Naive thymus-derived CD4-positive, alpha-beta T cell (primary cell): ENCODE measurements at regions of chr2 and their contacts with region 1.

Region 1: GRCh38 chr2:198296665-198297308 is 492.4 kb downstream of the PLCL1 start:
- DNase-seq: peak; percentile 11 to 67 (median 54)
- ATAC-seq: peak; percentile 84
- H3K4me3 ChIP-seq: no peak overlapping the region
- H3K4me3 Mint-ChIP-seq: peak overlapping the region in 1 of 10 donors; percentile 8
- H3K27ac ChIP-seq: no peak overlapping the region
- H3K27ac Mint-ChIP-seq: peak overlapping the region in 1 of 9 donors; percentile 41
- H3K4me1 ChIP-seq: no peaks in the 10 kb centered on the region
- H3K4me1 Mint-ChIP-seq: peaks cover 0 to 5% (median 0%) of the 10 kb centered on the region in 7 donors
- H3K27me3 ChIP-seq: no peaks in the 10 kb centered on the region
- H3K27me3 Mint-ChIP-seq: peaks cover 7 to 19% (median 8%) of the 10 kb centered on the region in 5 donors

Region 2: DNA sequence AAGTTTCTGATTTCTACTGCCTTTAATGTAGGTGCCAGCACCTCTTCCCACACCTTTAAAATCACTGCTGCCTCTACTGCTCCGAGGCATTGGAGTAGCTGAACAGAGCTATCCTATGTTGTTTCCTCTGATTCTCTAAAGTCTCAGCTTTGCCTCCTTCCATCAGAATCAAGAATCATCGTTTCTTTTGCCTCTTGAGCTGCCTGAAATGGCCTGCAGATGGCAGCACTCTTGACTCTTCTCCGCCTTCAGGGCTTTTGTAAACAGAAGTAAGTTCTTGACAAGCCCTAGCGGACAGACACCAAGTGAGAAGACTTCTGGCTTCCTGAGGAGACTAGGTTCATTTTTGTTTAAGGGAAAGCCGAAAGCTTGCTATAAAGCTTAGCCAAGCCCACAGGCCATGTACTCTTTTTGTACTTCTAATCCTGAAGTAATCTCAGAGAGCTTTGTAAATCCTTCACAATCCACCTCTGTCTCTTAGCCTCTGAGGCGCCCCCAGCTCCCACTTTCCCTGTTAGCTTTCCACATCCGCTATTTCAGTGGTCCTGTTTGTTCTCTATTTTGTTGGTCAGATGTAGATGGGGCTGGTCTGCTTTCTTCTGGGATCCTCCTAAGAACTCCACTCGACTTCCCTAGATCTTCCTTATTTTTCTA is 1545.7 kb before region 1 on chr2:
- CTCF ChIA-PET with region 1: no interaction called
- POLR2A ChIA-PET with region 1: no interaction called
- intact Hi-C with region 1: loop called in 1 of 2 experiments (anchors 1 kb)
- DNase-seq: peak; percentile 17 to 62 (median 51)
- ATAC-seq: peak; percentile 95
- H3K4me3 ChIP-seq: no peak overlapping the region
- H3K4me3 Mint-ChIP-seq: peak overlapping the region in 2 of 10 donors; percentile 7 to 33
- H3K27ac ChIP-seq: no peak overlapping the region
- H3K27ac Mint-ChIP-seq: peak overlapping the region in 4 of 9 donors; percentile 21 to 33 (median 28)
- H3K4me1 ChIP-seq: no peaks in the 10 kb centered on the region
- H3K4me1 Mint-ChIP-seq: peaks cover 9 to 24% (median 16%) of the 10 kb centered on the region in 7 donors
- H3K27me3 ChIP-seq: no peaks in the 10 kb centered on the region
- H3K27me3 Mint-ChIP-seq: no peaks in the 10 kb centered on the region

Region 3: GRCh38 chr2:197453161-197453914 is 843.4 kb before region 1 on chr2 and contains the start of gene COQ10B:
- CTCF ChIA-PET with region 1: no interaction called
- POLR2A ChIA-PET with region 1: no interaction called
- intact Hi-C with region 1: no loop called
- DNase-seq: peak; percentile 87 to 99 (median 98)
- ATAC-seq: peak; percentile 92
- H3K4me3 ChIP-seq: peak within 1 kb of the TSS; percentile 92
- H3K4me3 Mint-ChIP-seq: peak within 1 kb of the TSS; percentile 92 to 100 (median 99)
- H3K27ac ChIP-seq: peak within 1 kb of the TSS; percentile 96
- H3K27ac Mint-ChIP-seq: peak within 1 kb of the TSS; percentile 97 to 100 (median 100)
- H3K4me1 ChIP-seq: peaks cover 16% of the 10 kb centered on the region in 2 donors
- H3K4me1 Mint-ChIP-seq: peaks cover 25 to 56% (median 47%) of the 10 kb centered on the region in 7 donors
- H3K27me3 ChIP-seq: no peaks in the 10 kb centered on the region
- H3K27me3 Mint-ChIP-seq: peaks cover 0 to 2% (median 0%) of the 10 kb centered on the region in 5 donors
- total RNA-seq, gene COQ10B: 22.9 to 57.2 (median 30.5) TPM

Region 4: DNA sequence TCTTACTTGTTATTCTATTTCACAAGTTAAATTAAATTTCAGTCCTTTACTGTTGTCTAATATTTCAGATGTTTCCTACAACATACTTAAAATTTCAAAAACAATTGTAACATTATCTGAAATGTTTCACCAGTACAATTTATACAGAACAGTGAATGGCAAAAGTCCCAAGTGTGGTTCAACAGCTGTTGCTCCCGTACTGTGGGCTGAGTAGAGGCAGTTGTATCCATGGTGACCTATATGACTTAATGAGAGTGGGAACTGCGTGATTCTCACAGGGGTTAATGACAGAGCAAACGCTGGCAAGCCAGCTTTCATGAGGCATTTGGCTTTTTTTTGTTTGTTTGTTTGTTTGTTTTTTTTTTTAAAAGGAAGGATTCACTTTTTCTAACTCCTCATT is 497.7 kb before region 1 on chr2:
- CTCF ChIA-PET with region 1: interaction called, 32 read pairs
- POLR2A ChIA-PET with region 1: interaction called, 10 read pairs
- intact Hi-C with region 1: loop called (anchors 1 kb)
- DNase-seq: no peak
- ATAC-seq: no peak
- H3K4me3 ChIP-seq: no peak overlapping the region
- H3K4me3 Mint-ChIP-seq: no peak overlapping the region
- H3K27ac ChIP-seq: no peak overlapping the region
- H3K27ac Mint-ChIP-seq: no peak overlapping the region
- H3K4me1 ChIP-seq: peaks cover 4 to 7% of the 10 kb centered on the region in 2 donors
- H3K4me1 Mint-ChIP-seq: peaks cover 6 to 12% (median 11%) of the 10 kb centered on the region in 7 donors
- H3K27me3 ChIP-seq: peaks cover 0 to 5% of the 10 kb centered on the region in 2 donors
- H3K27me3 Mint-ChIP-seq: peaks cover 0 to 45% (median 12%) of the 10 kb centered on the region in 5 donors

Region 5: DNA sequence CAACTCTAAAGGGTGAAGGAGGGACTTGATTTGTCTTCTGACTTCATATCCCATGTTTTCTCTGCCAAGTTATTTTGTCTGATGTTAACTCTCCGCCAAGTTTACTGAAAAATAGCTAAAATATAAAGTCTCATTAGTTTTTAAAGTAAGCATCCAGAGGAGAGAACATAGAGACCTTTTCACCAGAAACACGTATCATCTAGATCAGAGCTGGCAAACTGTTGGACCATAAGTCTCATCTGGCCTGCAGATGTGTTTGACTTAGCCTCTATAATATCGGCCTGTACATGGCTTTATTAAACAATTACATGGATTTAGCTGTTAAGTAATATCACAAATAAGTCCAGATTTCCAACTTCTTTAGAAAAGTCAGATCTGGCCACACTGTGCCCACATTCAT is 309.8 kb before region 1 on chr2:
- CTCF ChIA-PET with region 1: no interaction called
- POLR2A ChIA-PET with region 1: no interaction called
- intact Hi-C with region 1: loop called in 1 of 2 experiments (anchors 10 kb)
- DNase-seq: no peak
- ATAC-seq: no peak
- H3K4me3 ChIP-seq: no peak overlapping the region
- H3K4me3 Mint-ChIP-seq: no peak overlapping the region
- H3K27ac ChIP-seq: no peak overlapping the region
- H3K27ac Mint-ChIP-seq: peak overlapping the region in 1 of 9 donors; percentile 25
- H3K4me1 ChIP-seq: peaks cover 0 to 4% of the 10 kb centered on the region in 2 donors
- H3K4me1 Mint-ChIP-seq: peaks cover 0 to 55% (median 28%) of the 10 kb centered on the region in 7 donors
- H3K27me3 ChIP-seq: no peaks in the 10 kb centered on the region
- H3K27me3 Mint-ChIP-seq: no peaks in the 10 kb centered on the region

Region 6: DNA sequence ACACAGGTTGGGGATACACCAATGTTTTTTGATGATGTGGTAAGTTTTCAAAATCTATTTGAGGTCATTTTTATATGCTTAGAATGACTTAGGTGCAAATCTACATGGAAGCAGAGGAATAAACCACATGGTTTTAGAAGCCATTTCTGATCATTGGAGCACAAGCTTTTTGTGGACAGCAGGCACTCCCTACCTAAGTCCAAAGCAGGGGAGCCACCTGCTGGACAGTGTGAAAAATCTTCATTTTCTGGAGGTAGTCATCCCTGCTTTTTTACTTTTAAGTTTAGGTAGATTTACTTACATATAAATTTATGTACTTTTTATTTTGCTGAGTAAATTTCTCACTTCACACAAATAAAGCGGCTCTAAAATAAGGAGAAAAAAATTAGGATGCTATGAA is 169.2 kb before region 1 on chr2:
- CTCF ChIA-PET with region 1: interaction called, 13 read pairs
- POLR2A ChIA-PET with region 1: no interaction called
- intact Hi-C with region 1: loop called (anchors 1 to 2 kb)
- DNase-seq: peak in 8 of 9 donors; percentile 24 to 66 (median 48)
- ATAC-seq: peak; percentile 81
- H3K4me3 ChIP-seq: no peak overlapping the region
- H3K4me3 Mint-ChIP-seq: no peak overlapping the region
- H3K27ac ChIP-seq: no peak overlapping the region
- H3K27ac Mint-ChIP-seq: peak overlapping the region in 1 of 9 donors; percentile 10
- H3K4me1 ChIP-seq: no peaks in the 10 kb centered on the region
- H3K4me1 Mint-ChIP-seq: peaks cover 0 to 21% (median 11%) of the 10 kb centered on the region in 7 donors
- H3K27me3 ChIP-seq: no peaks in the 10 kb centered on the region
- H3K27me3 Mint-ChIP-seq: peaks cover 0 to 3% (median 0%) of the 10 kb centered on the region in 5 donors